Sciatic nerve (tissue), 2 donors: ENCODE measurements at regions of chr6 and their contacts with region 1.

Region 1: DNA sequence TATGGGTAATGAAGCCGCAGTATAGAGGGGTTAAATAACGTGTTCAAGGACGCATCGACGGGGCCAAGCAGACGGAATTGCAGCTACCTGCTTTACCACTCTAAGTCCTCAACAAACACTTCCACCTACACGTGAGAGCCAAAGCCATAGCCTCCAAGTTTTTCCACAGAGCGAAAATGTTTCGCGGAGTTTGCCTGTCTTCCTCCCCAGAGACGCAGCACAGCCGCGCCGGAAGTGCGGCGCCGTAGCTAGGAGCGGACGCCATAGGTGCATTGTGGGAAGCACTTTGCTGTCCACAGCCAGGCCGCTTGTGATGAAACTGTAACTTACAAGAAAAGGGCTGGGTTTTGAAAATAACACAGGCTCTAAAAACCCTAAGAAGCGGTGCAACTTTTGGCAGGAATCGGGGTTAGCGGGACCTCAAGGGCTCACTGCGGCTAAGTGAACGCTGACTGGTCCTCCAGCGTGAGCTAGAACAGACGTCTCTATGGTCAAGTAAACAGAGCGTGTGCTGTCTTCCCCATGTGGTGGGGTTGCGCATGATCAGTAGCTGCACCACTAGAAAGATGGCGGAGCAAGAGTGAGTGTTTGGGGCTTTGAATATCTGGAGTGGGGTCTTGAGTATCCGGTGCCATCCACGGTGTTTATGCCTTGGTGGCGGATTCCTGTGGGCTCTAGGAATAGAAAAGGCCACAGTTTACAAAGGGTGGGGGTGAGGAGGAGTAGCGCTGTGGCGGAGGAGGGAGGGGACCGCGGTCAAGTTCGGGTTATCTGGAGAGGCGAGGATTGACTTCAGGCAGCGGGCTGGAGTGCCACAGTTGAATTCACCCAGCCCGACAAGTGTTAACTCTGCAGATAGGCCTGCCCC is at the start of gene RPL7L1:
- DNase-seq: peak; percentile 87
- ATAC-seq: peak; percentile 99
- total RNA-seq, gene RPL7L1: 51.6 TPM

Region 2: DNA sequence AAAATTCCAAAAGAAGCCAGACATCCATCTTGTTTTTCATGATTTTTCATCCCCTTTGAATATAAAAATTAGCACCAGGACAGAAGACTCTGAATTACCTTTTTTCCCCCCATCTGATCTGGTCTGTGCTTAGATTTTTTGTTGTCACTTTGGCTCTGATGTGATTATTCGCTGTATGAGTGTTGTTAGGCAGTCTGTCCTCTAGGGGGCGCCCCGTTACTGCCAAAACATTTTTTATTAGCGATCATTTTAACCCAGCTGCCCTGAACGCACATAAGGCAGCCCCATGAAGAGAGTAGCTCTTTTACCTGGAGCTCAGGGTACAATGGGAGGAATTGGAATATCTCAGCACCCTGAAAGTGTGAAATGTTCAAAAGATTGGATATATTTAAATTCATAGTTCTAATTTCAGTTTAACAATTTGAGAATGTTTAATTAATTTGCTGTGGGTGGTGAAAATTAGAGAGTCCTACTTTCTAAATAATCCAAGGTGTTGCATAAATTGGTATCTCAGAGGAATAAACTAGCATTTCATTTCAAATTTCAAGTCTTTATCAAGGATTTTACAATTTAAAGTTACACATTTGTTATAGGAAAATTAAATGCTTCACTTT is 218.0 kb before region 1 on chr6:
- intact Hi-C with region 1: loop called (anchors 10 kb)
- DNase-seq: peak; percentile 89
- ATAC-seq: peak; percentile 86

Region 3: DNA sequence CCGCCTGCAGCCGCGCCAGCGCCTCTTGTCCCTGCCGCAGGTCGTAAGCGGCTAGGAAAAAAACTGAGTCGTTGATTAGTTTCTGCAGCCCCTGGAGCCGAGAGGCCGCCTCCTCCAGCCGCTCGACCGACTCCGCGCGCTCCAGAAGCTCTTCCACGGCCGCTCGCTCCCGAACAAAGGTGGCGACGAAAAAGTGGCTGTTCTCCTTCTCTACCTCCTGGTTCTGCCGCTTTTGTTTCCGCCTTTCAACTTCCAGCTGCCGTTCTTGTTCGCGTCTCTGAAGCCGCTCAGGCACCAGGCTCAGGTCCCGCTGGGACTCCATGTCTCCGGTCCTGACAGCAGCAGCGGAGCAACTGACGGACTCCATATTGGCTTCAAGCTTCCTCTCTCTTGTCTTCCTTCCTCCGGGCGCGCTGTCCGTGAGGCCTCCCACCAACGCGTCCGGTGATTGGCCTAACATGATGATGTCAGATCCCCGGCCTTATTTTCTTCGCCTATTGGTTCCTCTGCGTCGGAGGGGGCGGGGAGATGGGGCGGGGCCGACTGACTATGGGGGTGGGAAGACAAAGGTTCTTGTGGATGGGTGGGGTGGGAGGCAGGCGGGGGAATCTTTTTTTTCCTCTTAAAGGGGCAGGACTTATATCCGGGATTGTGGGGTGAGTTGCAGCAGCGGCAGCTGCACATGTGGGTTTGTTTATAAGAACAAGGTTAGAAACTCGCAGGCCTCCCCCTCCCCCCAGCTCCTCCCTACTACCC is 133.7 kb before region 1 on chr6 and contains the start of gene TBCC:
- intact Hi-C with region 1: loop called (anchors 10 kb)
- DNase-seq: peak; percentile 96
- ATAC-seq: peak; percentile 95
- total RNA-seq, gene TBCC: 12.7 TPM